Sciatic nerve (tissue), 2 donors: ENCODE measurements at regions of chr10 and their contacts with region 1.

Region 1: GRCh38 chr10:6144406-6145165 is 55.8 kb downstream of the RBM17 start:
- DNase-seq: peak; percentile 94
- ATAC-seq: peak; percentile 88

Region 2: GRCh38 chr10:6202684-6203330 is 58.2 kb after region 1 on chr10 and contains the start of gene PFKFB3:
- intact Hi-C with region 1: loop called (anchors 10 kb)
- DNase-seq: peak; percentile 98
- ATAC-seq: peak; percentile 96
- total RNA-seq, gene PFKFB3: 87.7 TPM